Sciatic nerve (tissue), 2 donors: ENCODE measurements at regions of chr16 and their contacts with region 1.

Region 1: GRCh38 chr16:2253293-2253692 is 1.9 kb upstream of the ECI1 start:
- DNase-seq: no peak
- ATAC-seq: no peak

Region 2: GRCh38 chr16:2009789-2010510 is 243.3 kb before region 1 on chr16 and contains the start of gene ZNF598:
- intact Hi-C with region 1: loop called (anchors 5 kb)
- DNase-seq: peak; percentile 89
- ATAC-seq: peak; percentile 95
- total RNA-seq, gene ZNF598: 34.5 TPM

Region 3: GRCh38 chr16:2019921-2020831 is 233.1 kb before region 1 on chr16:
- intact Hi-C with region 1: loop called (anchors 1 kb)
- DNase-seq: no peak
- ATAC-seq: no peak